ENCODE measurements at regions of chr11 and their contacts with region 1.

Region 1: DNA sequence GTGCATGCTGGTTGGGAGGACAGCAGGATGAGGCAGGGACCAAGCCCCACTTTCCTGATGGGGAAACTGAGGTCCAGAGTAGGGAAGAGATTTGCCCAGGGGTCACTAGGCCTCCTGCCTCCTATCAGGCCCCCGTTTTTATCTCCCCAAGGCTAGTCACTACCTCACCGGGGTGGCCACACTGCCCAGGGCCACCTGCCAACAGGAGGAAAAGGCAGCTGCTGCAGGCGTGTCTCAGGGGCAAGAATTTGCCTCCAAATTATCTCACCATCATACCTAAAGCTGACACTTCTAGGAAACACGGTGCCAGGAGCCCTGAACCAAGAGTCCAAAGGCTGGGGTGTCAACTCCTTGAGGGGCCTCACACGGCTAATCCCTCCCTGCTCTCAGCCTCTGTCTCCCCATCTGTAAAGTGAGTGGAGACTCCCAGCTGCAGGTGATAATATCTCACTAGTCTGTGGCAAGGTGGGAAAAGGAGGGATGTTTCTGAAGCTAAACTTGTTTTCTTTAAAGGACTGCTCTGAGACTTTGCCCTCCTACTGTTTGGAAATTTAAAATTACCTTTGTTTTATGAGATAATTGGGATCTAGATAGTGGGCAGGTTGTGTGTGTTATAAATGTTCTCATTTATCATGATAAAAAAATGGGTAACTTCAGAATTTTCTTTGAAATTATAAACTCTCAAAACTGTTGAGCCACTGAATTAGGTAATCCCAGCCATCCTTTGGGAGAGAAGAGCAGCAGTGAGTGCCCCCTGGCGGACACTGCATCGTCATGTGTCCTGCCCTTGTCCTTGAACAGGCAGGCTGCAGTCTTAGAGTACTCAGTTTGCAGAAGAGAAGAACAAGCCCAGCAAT is 60.0 kb downstream of the MYO7A start:
- DNase-seq: peak; percentile 82
- H3K4me3 Mint-ChIP-seq: no peak overlapping the region
- H3K27ac Mint-ChIP-seq: no peak overlapping the region
- H3K4me1 Mint-ChIP-seq: peaks cover 5% of the 10 kb centered on the region
- H3K27me3 Mint-ChIP-seq: no peaks in the 10 kb centered on the region

Region 2: DNA sequence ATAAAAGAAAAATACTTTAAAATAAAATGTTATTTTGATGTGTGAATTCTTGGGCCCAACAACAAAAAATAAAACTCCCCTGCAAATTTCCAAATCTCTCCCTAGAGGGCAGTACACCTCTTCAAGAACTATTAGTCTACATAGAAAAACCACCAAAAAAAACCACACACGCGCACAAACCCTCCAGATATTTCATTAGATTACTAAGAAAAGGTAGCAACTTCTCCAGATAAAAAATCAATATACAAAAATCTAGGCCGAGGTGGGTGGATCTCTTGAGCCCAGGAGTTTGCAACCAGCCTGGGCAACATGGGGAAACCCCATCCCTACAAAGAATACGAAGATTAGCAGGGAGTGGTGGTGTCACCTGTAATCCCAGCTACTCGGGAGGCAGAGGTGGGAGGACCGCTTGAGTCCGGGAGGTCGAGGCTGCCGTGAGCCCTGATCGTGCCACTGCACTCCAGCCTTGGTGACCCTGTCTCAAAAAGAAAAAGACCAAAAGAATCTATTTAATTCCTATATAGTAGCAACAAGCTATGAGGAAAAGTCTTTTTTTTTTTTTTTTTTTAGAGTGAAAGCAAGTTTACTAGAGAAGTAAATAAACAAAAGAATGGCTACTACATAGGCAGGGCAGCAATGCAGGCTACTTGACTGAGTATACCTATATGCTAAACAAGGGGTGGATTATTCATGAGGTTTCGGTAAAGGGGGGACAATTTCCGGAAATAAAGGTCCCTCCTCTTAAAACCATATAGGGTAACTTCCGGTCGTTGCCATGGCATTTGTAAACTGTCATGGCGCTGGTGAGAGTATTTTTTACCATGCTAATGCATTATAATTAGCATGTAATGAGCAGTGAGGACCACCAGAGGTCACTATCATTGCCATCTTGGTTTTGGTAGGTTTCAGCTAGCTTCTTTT is 140.7 kb before region 1 on chr11:
- CTCF ChIA-PET with region 1: interaction called, 13 read pairs
- POLR2A ChIA-PET with region 1: no interaction called
- intact Hi-C with region 1: loop called (anchors 5 kb)
- DNase-seq: peak; percentile 81
- H3K4me3 Mint-ChIP-seq: peak overlapping the region; percentile 62
- H3K27ac Mint-ChIP-seq: peak overlapping the region; percentile 51
- H3K4me1 Mint-ChIP-seq: peaks cover 13% of the 10 kb centered on the region
- H3K27me3 Mint-ChIP-seq: peaks cover 6% of the 10 kb centered on the region

Region 3: GRCh38 chr11:77127232-77127911 is 60.6 kb before region 1 on chr11:
- CTCF ChIA-PET with region 1: interaction called, 149 read pairs
- POLR2A ChIA-PET with region 1: interaction called, 4 read pairs
- intact Hi-C with region 1: loop called (anchors 1 kb)
- DNase-seq: peak; percentile 67
- H3K4me3 Mint-ChIP-seq: peak overlapping the region; percentile 29
- H3K27ac Mint-ChIP-seq: no peak overlapping the region
- H3K4me1 Mint-ChIP-seq: peaks cover 5% of the 10 kb centered on the region
- H3K27me3 Mint-ChIP-seq: peaks cover 2% of the 10 kb centered on the region

Region 4: GRCh38 chr11:77147668-77148321 is 40.2 kb before region 1 on chr11:
- CTCF ChIA-PET with region 1: interaction called, 4 read pairs
- POLR2A ChIA-PET with region 1: no interaction called
- intact Hi-C with region 1: loop called (anchors 5 kb)
- DNase-seq: peak; percentile 47
- H3K4me3 Mint-ChIP-seq: peak overlapping the region; percentile 46
- H3K27ac Mint-ChIP-seq: peak overlapping the region; percentile 10
- H3K4me1 Mint-ChIP-seq: peaks cover 26% of the 10 kb centered on the region
- H3K27me3 Mint-ChIP-seq: peaks cover 3% of the 10 kb centered on the region

Region 5: GRCh38 chr11:77170107-77170506 is 17.9 kb before region 1 on chr11:
- CTCF ChIA-PET with region 1: interaction called, 15 read pairs
- POLR2A ChIA-PET with region 1: no interaction called
- intact Hi-C with region 1: no loop called
- DNase-seq: no peak
- H3K4me3 Mint-ChIP-seq: no peak overlapping the region
- H3K27ac Mint-ChIP-seq: no peak overlapping the region
- H3K4me1 Mint-ChIP-seq: no peaks in the 10 kb centered on the region
- H3K27me3 Mint-ChIP-seq: no peaks in the 10 kb centered on the region

Region 6: DNA sequence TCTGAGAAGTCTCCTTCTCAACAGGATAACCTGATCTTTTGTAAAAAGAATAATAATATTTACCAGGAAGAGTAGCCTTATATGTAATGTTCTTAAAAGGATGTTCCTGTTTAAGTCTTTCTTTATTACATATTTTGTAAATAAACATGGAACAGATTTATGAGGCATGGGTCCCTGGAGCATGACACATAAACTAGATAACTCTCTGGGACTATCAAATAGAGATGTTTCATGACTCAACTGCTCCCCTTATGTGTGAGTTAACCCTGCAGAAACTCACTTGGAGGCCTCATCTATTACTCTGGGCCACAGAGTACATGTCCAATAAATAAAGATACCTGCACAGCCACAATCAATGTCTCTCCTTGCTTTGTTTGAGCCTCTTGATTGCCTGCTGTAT is 48.9 kb after region 1 on chr11:
- CTCF ChIA-PET with region 1: no interaction called
- POLR2A ChIA-PET with region 1: no interaction called
- intact Hi-C with region 1: no loop called
- DNase-seq: no peak
- H3K4me3 Mint-ChIP-seq: no peak overlapping the region
- H3K27ac Mint-ChIP-seq: no peak overlapping the region
- H3K4me1 Mint-ChIP-seq: no peaks in the 10 kb centered on the region
- H3K27me3 Mint-ChIP-seq: peaks cover 5% of the 10 kb centered on the region

Region 7: GRCh38 chr11:77547863-77548551 is 360.0 kb after region 1 on chr11:
- CTCF ChIA-PET with region 1: interaction called, 23 read pairs
- POLR2A ChIA-PET with region 1: no interaction called
- intact Hi-C with region 1: loop called (anchors 1 kb)
- DNase-seq: peak; percentile 21
- H3K4me3 Mint-ChIP-seq: no peak overlapping the region
- H3K27ac Mint-ChIP-seq: no peak overlapping the region
- H3K4me1 Mint-ChIP-seq: peaks cover 2% of the 10 kb centered on the region
- H3K27me3 Mint-ChIP-seq: no peaks in the 10 kb centered on the region